ENCODE measurements at regions of chr7 and their contacts with region 1.

Region 1: GRCh38 chr7:5445981-5446594 is 22.5 kb upstream of the TNRC18 start:
- DNase-seq: no peak
- H3K4me3 ChIP-seq: no peak overlapping the region
- CTCF ChIP-seq: no peak

Region 2: DNA sequence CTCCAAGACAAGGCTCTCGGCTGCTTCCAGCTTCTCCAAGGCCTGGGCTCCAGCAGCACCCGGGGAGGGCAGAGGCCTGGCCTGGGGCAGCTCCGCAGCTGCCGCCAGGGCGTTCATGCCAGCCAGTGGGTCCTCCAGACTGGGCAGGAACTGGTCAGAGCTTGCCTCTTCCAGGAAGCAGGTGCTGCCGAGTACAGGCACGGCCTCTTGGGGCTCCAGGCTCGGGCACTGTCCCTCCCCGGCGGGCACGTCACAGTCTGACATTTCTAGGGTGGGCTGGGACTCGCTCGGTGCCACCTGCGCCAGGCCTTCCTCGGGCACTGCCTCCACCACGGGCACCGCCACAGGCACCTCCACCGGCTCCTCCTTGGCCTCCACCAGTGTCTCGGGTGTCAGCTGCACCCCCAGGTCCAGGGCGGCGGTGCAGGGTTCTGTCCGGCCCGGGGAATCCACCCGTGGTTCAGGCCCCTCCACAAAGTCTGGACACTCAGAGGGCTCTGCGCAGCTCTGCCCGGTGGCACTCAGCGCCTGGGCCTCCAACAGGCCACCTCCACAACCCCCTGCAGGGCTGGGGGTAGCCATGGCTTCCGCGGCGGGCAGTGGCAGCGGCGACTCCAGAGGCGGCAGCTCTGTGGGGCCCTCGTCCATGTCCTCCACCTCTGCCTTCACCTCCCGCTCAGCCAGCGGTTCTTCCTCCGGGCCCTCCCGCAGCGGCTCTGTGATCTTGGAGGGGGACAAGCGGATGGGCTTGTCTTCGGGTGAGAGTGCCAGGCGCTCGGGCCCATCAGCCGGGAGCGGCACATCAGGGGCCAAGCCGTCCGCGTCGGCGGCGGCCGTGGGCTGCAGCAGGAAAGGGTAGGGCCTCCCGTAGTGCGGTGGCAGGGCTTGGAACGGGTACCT is 75.4 kb before region 1 on chr7:
- in situ Hi-C with region 1: no loop called
- DNase-seq: no peak
- H3K4me3 ChIP-seq: no peak overlapping the region
- CTCF ChIP-seq: no peak

Region 3: GRCh38 chr7:5382281-5382892 is 63.7 kb before region 1 on chr7:
- in situ Hi-C with region 1: loop called (anchors 10 kb)
- DNase-seq: no peak
- H3K4me3 ChIP-seq: no peak overlapping the region
- CTCF ChIP-seq: no peak